PC-9 (cell line): ENCODE measurements at regions of chr15 and their contacts with region 1.

Region 1: GRCh38 chr15:68304589-68305337 is 27.2 kb downstream of the FEM1B start:
- DNase-seq: no peak
- H3K4me3 ChIP-seq: no peak overlapping the region
- H3K27ac ChIP-seq: no peak overlapping the region
- H3K4me1 ChIP-seq: no peaks in the 10 kb centered on the region
- H3K27me3 ChIP-seq: no peaks in the 10 kb centered on the region
- CTCF ChIP-seq: no peak

Region 2: DNA sequence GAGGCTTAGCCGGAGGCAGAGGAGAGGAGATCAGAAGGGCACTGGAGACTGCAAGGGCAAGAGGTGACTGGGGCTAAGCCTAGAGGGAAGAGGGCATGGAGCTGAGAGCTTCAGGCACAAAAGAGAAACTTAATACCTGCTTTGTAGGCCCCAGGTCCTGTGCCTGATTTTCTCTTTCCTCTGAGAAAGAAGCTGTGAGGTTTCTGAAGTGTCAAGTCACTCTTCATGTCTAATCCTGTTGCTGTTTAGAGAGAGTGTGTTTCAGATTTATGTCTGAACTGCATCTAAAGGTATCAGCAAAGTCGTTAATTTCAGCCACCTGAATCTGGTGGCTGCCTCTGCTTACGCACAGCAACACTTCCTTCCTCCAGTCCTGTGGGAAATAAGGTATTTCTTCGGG is 358.1 kb before region 1 on chr15:
- CTCF ChIA-PET with region 1: no interaction called
- POLR2A ChIA-PET with region 1: no interaction called
- intact Hi-C with region 1: no loop called
- DNase-seq: no peak
- H3K4me3 ChIP-seq: no peak overlapping the region
- H3K27ac ChIP-seq: peak overlapping the region; percentile 54
- H3K4me1 ChIP-seq: peaks cover 24% of the 10 kb centered on the region
- H3K27me3 ChIP-seq: no peaks in the 10 kb centered on the region
- CTCF ChIP-seq: no peak

Region 3: GRCh38 chr15:68187559-68187958 is 117.2 kb before region 1 on chr15:
- CTCF ChIA-PET with region 1: no interaction called
- POLR2A ChIA-PET with region 1: no interaction called
- intact Hi-C with region 1: no loop called
- DNase-seq: no peak
- H3K4me3 ChIP-seq: no peak overlapping the region
- H3K27ac ChIP-seq: no peak overlapping the region
- H3K4me1 ChIP-seq: no peaks in the 10 kb centered on the region
- H3K27me3 ChIP-seq: no peaks in the 10 kb centered on the region
- CTCF ChIP-seq: no peak

Region 4: DNA sequence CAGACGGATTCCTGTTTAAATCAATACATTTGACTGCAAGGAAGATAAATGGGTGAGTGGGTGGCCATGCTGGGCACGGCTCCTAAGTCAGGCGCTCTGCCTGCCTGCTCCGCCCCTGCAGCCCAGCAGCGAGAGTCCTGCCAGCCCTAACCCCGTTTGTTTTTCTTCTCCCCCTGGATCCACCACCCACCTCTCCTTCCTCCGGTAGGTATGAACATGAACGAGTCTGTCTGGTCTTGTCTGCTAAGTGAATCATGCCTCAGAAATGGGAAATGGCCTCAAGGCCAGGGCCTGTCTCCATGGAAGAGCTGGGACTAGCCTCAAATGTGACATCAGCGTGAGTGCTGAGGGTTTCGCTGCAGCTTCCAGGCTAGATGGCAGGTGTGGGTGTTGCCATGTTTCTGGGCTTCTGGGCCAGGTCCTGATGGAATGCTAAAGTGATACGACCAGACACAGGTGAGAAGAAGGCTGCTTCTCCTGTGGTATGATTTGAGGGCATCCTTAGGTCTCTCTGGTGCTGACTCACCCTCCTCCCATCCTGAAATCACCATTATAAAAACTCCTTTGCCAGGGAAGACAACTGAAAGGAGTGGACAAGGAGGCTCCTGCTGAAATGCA is 32.8 kb before region 1 on chr15:
- CTCF ChIA-PET with region 1: interaction called, 5 read pairs
- POLR2A ChIA-PET with region 1: interaction called, 10 read pairs
- intact Hi-C with region 1: no loop called
- DNase-seq: peak; percentile 89 to 97
- H3K4me3 ChIP-seq: peak overlapping the region; percentile 43; the same call in 1 of the 2 replicates
- H3K27ac ChIP-seq: peak overlapping the region; percentile 86
- H3K4me1 ChIP-seq: peaks cover 62% of the 10 kb centered on the region
- H3K27me3 ChIP-seq: no peaks in the 10 kb centered on the region
- CTCF ChIP-seq: no peak

Region 5: GRCh38 chr15:68372291-68372811 is 67.6 kb after region 1 on chr15:
- CTCF ChIA-PET with region 1: no interaction called
- POLR2A ChIA-PET with region 1: no interaction called
- intact Hi-C with region 1: loop called (anchors 1 kb)
- DNase-seq: no peak
- H3K4me3 ChIP-seq: no peak overlapping the region
- H3K27ac ChIP-seq: no peak overlapping the region
- H3K4me1 ChIP-seq: no peaks in the 10 kb centered on the region
- H3K27me3 ChIP-seq: no peaks in the 10 kb centered on the region
- CTCF ChIP-seq: peak; percentile 42

Region 6: DNA sequence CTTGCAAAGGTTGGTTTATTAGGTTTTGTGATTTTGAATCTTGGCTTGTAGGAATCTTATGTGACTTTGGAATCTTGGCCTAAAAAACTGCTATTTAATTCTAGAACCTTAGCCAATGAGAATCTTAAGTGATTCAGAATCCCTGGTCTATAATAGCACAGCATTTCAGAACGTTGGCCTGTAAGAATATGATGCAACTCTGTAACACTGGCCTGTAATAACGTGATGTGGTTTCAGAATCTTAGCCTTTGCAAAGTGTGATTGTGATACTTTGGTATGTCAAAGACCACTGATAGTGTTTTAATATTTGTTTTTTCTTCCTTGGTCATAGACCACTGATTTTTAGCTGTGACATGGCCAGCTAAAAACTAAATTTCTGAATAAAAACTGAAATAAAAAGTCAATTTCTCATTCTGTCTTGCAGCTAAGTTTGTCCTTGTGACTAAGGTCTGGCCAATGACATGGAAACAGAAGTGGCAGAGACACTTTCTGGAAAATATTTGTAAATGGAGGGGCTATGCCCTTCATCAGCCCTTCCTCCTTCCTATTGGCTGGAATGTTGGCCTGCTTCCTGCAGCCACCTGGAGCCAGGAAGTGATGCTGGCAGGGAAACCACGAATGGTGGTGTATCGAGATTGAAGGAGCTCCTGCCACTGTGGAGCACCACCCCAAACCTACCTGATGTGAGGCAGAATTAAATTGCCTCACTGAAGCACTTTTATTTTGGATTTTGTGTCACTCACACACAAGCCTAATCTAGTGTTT is 231.8 kb after region 1 on chr15:
- CTCF ChIA-PET with region 1: interaction called, 3 read pairs
- POLR2A ChIA-PET with region 1: no interaction called
- intact Hi-C with region 1: loop called (anchors 1 kb)
- DNase-seq: no peak
- H3K4me3 ChIP-seq: no peak overlapping the region
- H3K27ac ChIP-seq: no peak overlapping the region
- H3K4me1 ChIP-seq: no peaks in the 10 kb centered on the region
- H3K27me3 ChIP-seq: no peaks in the 10 kb centered on the region
- CTCF ChIP-seq: no peak

Region 7: DNA sequence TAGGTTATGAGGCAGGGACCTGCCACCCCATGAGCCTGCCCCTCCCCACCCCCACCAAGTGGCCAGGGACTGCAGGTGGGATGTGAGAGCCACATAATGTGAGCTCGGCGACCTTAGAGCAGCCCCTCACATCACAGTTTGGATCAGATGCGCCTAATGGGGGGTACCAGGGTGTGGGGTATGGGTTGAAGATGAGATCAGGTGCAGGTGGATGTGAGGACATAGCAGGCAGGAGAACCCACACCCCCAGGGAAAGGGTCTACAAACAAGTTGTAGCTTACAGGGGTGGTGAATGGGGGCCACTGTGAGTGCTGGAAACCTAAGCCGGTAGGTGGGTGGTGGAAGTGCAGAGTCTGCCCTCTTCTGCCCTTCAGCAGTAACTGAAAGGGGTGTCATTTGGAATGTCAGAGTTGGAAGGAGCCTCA is 368.0 kb after region 1 on chr15:
- CTCF ChIA-PET with region 1: interaction called, 23 read pairs
- POLR2A ChIA-PET with region 1: no interaction called
- intact Hi-C with region 1: loop called (anchors 1 kb)
- DNase-seq: no peak
- H3K4me3 ChIP-seq: no peak overlapping the region
- H3K27ac ChIP-seq: no peak overlapping the region
- H3K4me1 ChIP-seq: no peaks in the 10 kb centered on the region
- H3K27me3 ChIP-seq: no peaks in the 10 kb centered on the region
- CTCF ChIP-seq: 0 out of 2 replicates have a peak, but pooled peaks have one; percentile 23

Region 8: GRCh38 chr15:68924866-68925560 is 620.2 kb after region 1 on chr15:
- CTCF ChIA-PET with region 1: interaction called, 4 read pairs
- POLR2A ChIA-PET with region 1: no interaction called
- intact Hi-C with region 1: loop called (anchors 1 kb)
- DNase-seq: peak; percentile 48 to 77
- H3K4me3 ChIP-seq: no peak overlapping the region
- H3K27ac ChIP-seq: no peak overlapping the region
- H3K4me1 ChIP-seq: no peaks in the 10 kb centered on the region
- H3K27me3 ChIP-seq: no peaks in the 10 kb centered on the region
- CTCF ChIP-seq: peak; percentile 86

Region 9: GRCh38 chr15:68962465-68962864 is 657.7 kb after region 1 on chr15:
- CTCF ChIA-PET with region 1: no interaction called
- POLR2A ChIA-PET with region 1: no interaction called
- intact Hi-C with region 1: no loop called
- DNase-seq: no peak
- H3K4me3 ChIP-seq: no peak overlapping the region
- H3K27ac ChIP-seq: no peak overlapping the region
- H3K4me1 ChIP-seq: no peaks in the 10 kb centered on the region
- H3K27me3 ChIP-seq: no peaks in the 10 kb centered on the region
- CTCF ChIP-seq: no peak